ENCODE measurements at regions of chr20 and their contacts with region 1.

Region 1: GRCh38 chr20:23200918-23201317 is 114.8 kb upstream of the CD93 start:
- DNase-seq: peak; percentile 43 to 66
- ATAC-seq: peak; percentile 84 to 93; a peak in 5 of 6 replicates
- H3K4me3 ChIP-seq: no peak overlapping the region
- H3K27ac ChIP-seq: 0 out of 6 replicates have a peak overlapping the region, but pooled peaks of 1 of the 2 experiments have one; percentile 8
- H3K4me1 ChIP-seq: no peaks in the 10 kb centered on the region
- CTCF ChIP-seq: peak; percentile 54
- EP300 ChIP-seq: no peak
- POLR2A ChIP-seq: no peak
- RAD21 ChIP-seq: peak; percentile 74 to 76

Region 2: GRCh38 chr20:22700367-22700766 is 500.6 kb before region 1 on chr20:
- CTCF ChIA-PET with region 1: interaction called, 10 read pairs
- POLR2A ChIA-PET with region 1: no interaction called
- DNase-seq: no peak
- ATAC-seq: no peak; a peak in 1 of 6 replicates
- H3K4me3 ChIP-seq: no peak overlapping the region
- H3K27ac ChIP-seq: peak overlapping the region; percentile 17 to 54
- H3K4me1 ChIP-seq: peaks cover 14% of the 10 kb centered on the region; the same call in 2 of the 3 replicates
- CTCF ChIP-seq: no peak
- EP300 ChIP-seq: no peak
- POLR2A ChIP-seq: no peak
- RAD21 ChIP-seq: no peak

Region 3: GRCh38 chr20:23136893-23137750 is 63.8 kb before region 1 on chr20:
- CTCF ChIA-PET with region 1: no interaction called
- POLR2A ChIA-PET with region 1: no interaction called
- DNase-seq: peak in 1 of 2 experiments; percentile 43
- ATAC-seq: peak in 1 of 2 experiments; percentile 27; a peak in 3 of 6 replicates
- H3K4me3 ChIP-seq: no peak overlapping the region
- H3K27ac ChIP-seq: peak overlapping the region in 1 of 2 experiments; percentile 39; a peak in 1 of 6 replicates
- H3K4me1 ChIP-seq: peaks cover 6% of the 10 kb centered on the region; the same call in 2 of the 3 replicates
- CTCF ChIP-seq: no peak
- EP300 ChIP-seq: no peak
- POLR2A ChIP-seq: no peak
- RAD21 ChIP-seq: no peak

Region 4: GRCh38 chr20:23178806-23179205 is 22.1 kb before region 1 on chr20:
- CTCF ChIA-PET with region 1: interaction called, 12 read pairs
- POLR2A ChIA-PET with region 1: no interaction called
- DNase-seq: no peak
- ATAC-seq: 0 out of 6 replicates have a peak, but pooled peaks of 1 of the 2 experiments have one; percentile 30
- H3K4me3 ChIP-seq: no peak overlapping the region
- H3K27ac ChIP-seq: no peak overlapping the region
- H3K4me1 ChIP-seq: no peaks in the 10 kb centered on the region
- CTCF ChIP-seq: no peak
- EP300 ChIP-seq: no peak
- POLR2A ChIP-seq: no peak
- RAD21 ChIP-seq: no peak

Region 5: DNA sequence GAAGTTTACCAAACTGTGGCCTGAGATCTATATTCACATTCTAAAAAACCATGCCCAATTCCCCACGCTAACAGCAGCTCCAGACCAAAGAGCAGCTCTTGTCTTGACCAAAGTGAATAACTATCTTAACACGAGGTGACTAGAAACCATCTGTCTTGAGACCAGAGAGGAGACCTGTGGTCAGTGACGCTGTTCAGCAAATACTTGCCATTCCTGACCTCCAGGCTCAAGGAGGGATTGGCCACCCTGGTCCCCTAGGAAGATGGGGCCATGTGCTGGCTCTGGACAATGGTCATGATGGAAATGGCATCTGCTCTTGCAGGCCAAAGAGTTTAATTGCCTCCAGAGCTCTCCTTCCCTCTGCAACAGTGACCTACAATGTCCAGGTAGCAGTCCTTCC is 10.3 kb before region 1 on chr20:
- CTCF ChIA-PET with region 1: interaction called, 11 read pairs
- POLR2A ChIA-PET with region 1: no interaction called
- DNase-seq: no peak
- ATAC-seq: no peak
- H3K4me3 ChIP-seq: no peak overlapping the region
- H3K27ac ChIP-seq: no peak overlapping the region
- H3K4me1 ChIP-seq: no peaks in the 10 kb centered on the region
- CTCF ChIP-seq: no peak
- EP300 ChIP-seq: no peak
- POLR2A ChIP-seq: no peak
- RAD21 ChIP-seq: no peak